ENCODE measurements at regions of chr13 and their contacts with region 1.

Region 1: DNA sequence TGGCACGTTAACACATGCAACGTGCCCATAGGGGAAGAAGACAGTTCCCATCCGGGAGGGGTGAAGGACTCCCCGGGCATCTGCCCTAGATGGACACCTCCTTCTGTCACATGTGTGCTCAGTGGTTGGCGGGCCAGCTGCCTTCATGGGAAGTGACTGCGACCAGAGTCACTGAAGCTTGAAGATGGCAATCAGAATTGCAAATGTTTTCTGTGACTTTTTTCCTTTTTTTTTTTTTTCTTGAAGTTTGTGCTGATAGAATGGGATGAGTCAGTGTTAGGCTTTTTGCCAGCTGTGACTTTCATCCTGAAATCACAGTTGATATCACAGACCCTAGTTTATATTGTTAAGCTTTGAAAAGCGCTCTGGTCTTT is 109.2 kb upstream of the MCF2L start:
- DNase-seq: no peak
- ATAC-seq: peak in 1 of 2 donors; percentile 39
- H3K4me3 ChIP-seq: no peak overlapping the region
- H3K27ac ChIP-seq: peak overlapping the region in 3 of 4 donors; percentile 6 to 52 (median 38)
- H3K4me1 ChIP-seq: no peaks in the 10 kb centered on the region
- H3K27me3 ChIP-seq: no peaks in the 10 kb centered on the region
- CTCF ChIP-seq: no peak
- POLR2A ChIP-seq: no peak

Region 2: GRCh38 chr13:111973605-111974340 is 886.0 kb before region 1 on chr13:
- in situ Hi-C with region 1: no loop called
- intact Hi-C with region 1: no loop called
- DNase-seq: no peak
- ATAC-seq: no peak
- H3K4me3 ChIP-seq: no peak overlapping the region
- H3K27ac ChIP-seq: no peak overlapping the region
- H3K4me1 ChIP-seq: peaks cover 0 to 4% of the 10 kb centered on the region in 2 donors
- H3K27me3 ChIP-seq: peaks cover 7 to 32% (median 26%) of the 10 kb centered on the region in 3 donors
- CTCF ChIP-seq: no peak
- POLR2A ChIP-seq: no peak

Region 3: GRCh38 chr13:112643759-112644459 is 215.9 kb before region 1 on chr13:
- in situ Hi-C with region 1: loop called in 3 of 4 experiments (anchors 10 to 25 kb)
- intact Hi-C with region 1: no loop called
- DNase-seq: no peak
- ATAC-seq: no peak
- H3K4me3 ChIP-seq: no peak overlapping the region
- H3K27ac ChIP-seq: no peak overlapping the region
- H3K4me1 ChIP-seq: no peaks in the 10 kb centered on the region
- H3K27me3 ChIP-seq: peaks cover 4 to 9% (median 4%) of the 10 kb centered on the region in 3 donors
- CTCF ChIP-seq: no peak
- POLR2A ChIP-seq: no peak

Region 4: GRCh38 chr13:112825071-112825470 is 34.7 kb before region 1 on chr13:
- in situ Hi-C with region 1: no loop called
- intact Hi-C with region 1: loop called (anchors 1 kb)
- DNase-seq: no peak
- ATAC-seq: no peak
- H3K4me3 ChIP-seq: no peak overlapping the region
- H3K27ac ChIP-seq: no peak overlapping the region
- H3K4me1 ChIP-seq: peaks cover 0 to 3% of the 10 kb centered on the region in 2 donors
- H3K27me3 ChIP-seq: no peaks in the 10 kb centered on the region
- CTCF ChIP-seq: no peak
- POLR2A ChIP-seq: no peak

Measured in gastrocnemius medialis (tissue), 4 donors.